ENCODE measurements at regions of chr11 and their contacts with region 1.

Region 1: DNA sequence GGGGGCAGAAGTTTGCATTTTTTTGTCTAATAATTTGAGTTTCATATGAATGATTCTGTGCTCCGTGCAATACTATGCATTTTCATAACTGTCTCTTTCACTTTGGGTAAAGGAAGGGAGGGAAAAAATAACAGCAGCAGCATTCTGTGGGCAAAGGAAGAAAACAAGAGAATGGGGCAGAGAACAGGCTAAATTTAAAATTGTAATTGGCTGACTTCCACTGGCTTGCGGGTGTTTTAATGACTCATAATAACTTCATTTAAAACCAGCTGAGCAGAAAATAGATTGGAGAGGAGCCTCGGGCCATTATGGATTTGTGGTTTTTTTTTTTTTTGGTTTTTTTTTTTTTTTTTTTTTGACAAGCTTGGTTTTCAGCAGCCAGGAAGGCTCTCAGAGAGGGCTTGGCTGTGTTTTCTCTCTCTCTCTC is 107.4 kb downstream of the ZBTB16 start:
- DNase-seq: peak; percentile 96
- H3K4me3 ChIP-seq: no peak overlapping the region
- CTCF ChIP-seq: no peak

Region 2: GRCh38 chr11:114110952-114111947 is 55.7 kb before region 1 on chr11:
- in situ Hi-C with region 1: no loop called
- DNase-seq: peak; percentile 76
- H3K4me3 ChIP-seq: no peak overlapping the region
- CTCF ChIP-seq: no peak

Region 3: DNA sequence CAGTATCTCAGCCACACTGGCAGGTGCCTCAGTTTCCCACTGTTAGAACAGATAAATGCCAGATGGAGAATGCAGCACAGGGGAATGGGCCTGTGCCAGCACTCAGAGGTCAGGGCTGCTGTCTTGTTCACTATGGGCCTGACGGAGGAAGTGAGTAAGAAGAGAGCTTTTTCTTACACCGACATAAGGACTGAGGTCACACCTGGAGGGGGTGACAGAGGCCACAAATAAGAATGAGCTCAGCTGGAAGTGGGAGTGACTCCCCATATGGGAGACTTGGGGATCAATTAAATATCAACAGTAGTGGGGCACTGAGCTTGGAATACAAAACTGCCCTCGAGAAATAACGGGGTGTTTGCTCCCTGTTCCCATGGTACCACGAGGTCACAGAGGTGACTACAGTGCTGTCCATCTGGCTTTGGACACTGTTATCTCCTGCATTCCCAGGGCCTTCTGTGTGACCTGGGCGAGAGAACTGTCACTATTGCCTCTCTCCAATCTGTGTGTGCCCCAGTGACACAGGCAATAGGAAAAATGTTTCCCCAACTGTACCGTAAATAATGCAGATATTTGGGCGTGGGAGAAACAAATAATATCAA is 35.2 kb after region 1 on chr11:
- in situ Hi-C with region 1: loop called (anchors 5 kb)
- DNase-seq: no peak
- H3K4me3 ChIP-seq: no peak overlapping the region
- CTCF ChIP-seq: no peak

Region 4: GRCh38 chr11:114257621-114258558 is 91.0 kb after region 1 on chr11:
- in situ Hi-C with region 1: loop called (anchors 5 kb)
- DNase-seq: no peak
- H3K4me3 ChIP-seq: no peak overlapping the region
- CTCF ChIP-seq: peak; percentile 48

Measured in astrocyte of the cerebellum (primary cell).